ENCODE measurements at regions of chr16 and their contacts with region 1.

Region 1: GRCh38 chr16:27449434-27450195 is 47.6 kb downstream of the IL21R start:
- DNase-seq: peak in 6 of 9 donors; percentile 27 to 73 (median 40)
- ATAC-seq: peak; percentile 79
- H3K4me3 ChIP-seq: no peak overlapping the region
- H3K4me3 Mint-ChIP-seq: peak overlapping the region; percentile 16 to 66 (median 42)
- H3K27ac ChIP-seq: peak overlapping the region; percentile 57
- H3K27ac Mint-ChIP-seq: peak overlapping the region; percentile 66 to 93 (median 85)
- H3K4me1 ChIP-seq: peaks cover 48 to 67% of the 10 kb centered on the region in 2 donors
- H3K4me1 Mint-ChIP-seq: peaks cover 52 to 91% (median 66%) of the 10 kb centered on the region in 7 donors
- H3K27me3 ChIP-seq: no peaks in the 10 kb centered on the region
- H3K27me3 Mint-ChIP-seq: no peaks in the 10 kb centered on the region

Region 2: GRCh38 chr16:26930786-26931581 is 518.6 kb before region 1 on chr16:
- CTCF ChIA-PET with region 1: no interaction called
- POLR2A ChIA-PET with region 1: no interaction called
- intact Hi-C with region 1: no loop called
- DNase-seq: no peak
- ATAC-seq: no peak
- H3K4me3 ChIP-seq: no peak overlapping the region
- H3K4me3 Mint-ChIP-seq: no peak overlapping the region
- H3K27ac ChIP-seq: no peak overlapping the region
- H3K27ac Mint-ChIP-seq: no peak overlapping the region
- H3K4me1 ChIP-seq: no peaks in the 10 kb centered on the region
- H3K4me1 Mint-ChIP-seq: peaks cover 0 to 2% (median 0%) of the 10 kb centered on the region in 7 donors
- H3K27me3 ChIP-seq: no peaks in the 10 kb centered on the region
- H3K27me3 Mint-ChIP-seq: peaks cover 0 to 19% (median 7%) of the 10 kb centered on the region in 5 donors

Region 3: DNA sequence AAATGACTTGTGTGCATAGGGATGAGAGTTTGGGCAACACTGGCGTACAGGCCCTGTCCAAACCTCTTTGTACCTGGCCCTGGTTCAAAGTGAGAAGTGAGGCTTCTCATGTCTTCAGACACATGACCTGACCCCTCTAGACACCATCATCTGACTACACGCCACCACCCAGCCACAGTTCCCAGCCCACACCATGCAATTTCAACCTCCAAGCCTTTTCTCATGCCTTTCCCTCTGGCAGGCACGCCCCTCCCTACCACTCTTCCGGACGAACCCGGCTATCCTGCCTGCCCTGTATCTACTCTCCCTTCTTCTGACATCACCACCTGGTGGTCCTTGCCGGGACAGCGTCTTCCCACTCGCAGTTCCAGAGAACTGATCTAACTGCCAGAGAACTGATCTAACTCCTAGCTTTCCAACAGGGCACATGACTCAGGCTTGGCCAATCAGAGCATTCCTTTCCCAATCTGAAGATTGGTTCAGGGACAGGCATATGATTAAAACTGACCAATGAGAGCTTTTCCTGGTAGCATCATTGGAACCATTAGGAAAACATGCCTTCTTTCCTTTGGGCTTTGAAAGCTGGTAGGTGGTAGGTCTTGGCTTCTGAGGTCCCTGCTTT is 74.7 kb before region 1 on chr16:
- CTCF ChIA-PET with region 1: interaction called, 4 read pairs
- POLR2A ChIA-PET with region 1: interaction called, 10 read pairs
- intact Hi-C with region 1: loop called in 1 of 2 experiments (anchors 2 kb)
- DNase-seq: peak in 1 of 9 donors; percentile 50
- ATAC-seq: peak; percentile 64
- H3K4me3 ChIP-seq: no peak overlapping the region
- H3K4me3 Mint-ChIP-seq: no peak overlapping the region
- H3K27ac ChIP-seq: peak overlapping the region; percentile 53
- H3K27ac Mint-ChIP-seq: no peak overlapping the region
- H3K4me1 ChIP-seq: peaks cover 32 to 71% of the 10 kb centered on the region in 2 donors
- H3K4me1 Mint-ChIP-seq: peaks cover 29 to 53% (median 45%) of the 10 kb centered on the region in 7 donors
- H3K27me3 ChIP-seq: no peaks in the 10 kb centered on the region
- H3K27me3 Mint-ChIP-seq: no peaks in the 10 kb centered on the region

Region 4: DNA sequence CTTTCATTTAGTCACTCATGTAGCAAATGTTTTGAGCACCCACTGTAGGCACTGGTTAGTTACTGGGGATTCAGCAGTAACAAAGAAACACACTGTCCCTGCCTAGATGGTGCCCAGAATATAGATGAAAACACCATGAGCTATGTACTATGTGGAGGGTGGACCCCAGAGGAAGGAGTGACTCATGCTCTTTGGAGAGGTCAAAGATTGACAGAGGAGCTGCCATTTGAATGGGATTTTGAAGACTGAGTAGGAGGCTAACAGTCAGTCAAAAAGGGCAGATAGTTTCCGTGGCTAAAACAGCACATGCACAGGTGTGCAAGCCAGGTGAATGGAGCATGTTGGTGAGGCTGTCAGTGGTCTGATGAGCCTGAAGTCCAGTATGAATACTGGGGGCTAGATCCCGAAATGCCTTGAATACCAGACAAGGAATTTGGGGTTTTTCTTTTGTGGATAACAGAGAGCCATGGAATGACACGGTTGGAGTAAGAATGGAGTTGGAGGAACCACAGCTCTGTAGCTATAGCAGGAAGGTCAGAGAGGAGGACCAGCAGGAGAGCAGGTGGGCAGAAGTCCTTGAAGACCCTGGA is 41.5 kb before region 1 on chr16:
- CTCF ChIA-PET with region 1: interaction called, 3 read pairs
- POLR2A ChIA-PET with region 1: interaction called, 22 read pairs
- intact Hi-C with region 1: no loop called
- DNase-seq: peak in 3 of 9 donors; percentile 21 to 57 (median 56)
- ATAC-seq: peak; percentile 38
- H3K4me3 ChIP-seq: peak overlapping the region; percentile 10
- H3K4me3 Mint-ChIP-seq: peak overlapping the region; percentile 17 to 99 (median 91)
- H3K27ac ChIP-seq: peak overlapping the region; percentile 91
- H3K27ac Mint-ChIP-seq: peak overlapping the region; percentile 67 to 99 (median 97)
- H3K4me1 ChIP-seq: peaks cover 58 to 59% of the 10 kb centered on the region in 2 donors
- H3K4me1 Mint-ChIP-seq: peaks cover 63 to 97% (median 91%) of the 10 kb centered on the region in 7 donors
- H3K27me3 ChIP-seq: no peaks in the 10 kb centered on the region
- H3K27me3 Mint-ChIP-seq: no peaks in the 10 kb centered on the region

Region 5: DNA sequence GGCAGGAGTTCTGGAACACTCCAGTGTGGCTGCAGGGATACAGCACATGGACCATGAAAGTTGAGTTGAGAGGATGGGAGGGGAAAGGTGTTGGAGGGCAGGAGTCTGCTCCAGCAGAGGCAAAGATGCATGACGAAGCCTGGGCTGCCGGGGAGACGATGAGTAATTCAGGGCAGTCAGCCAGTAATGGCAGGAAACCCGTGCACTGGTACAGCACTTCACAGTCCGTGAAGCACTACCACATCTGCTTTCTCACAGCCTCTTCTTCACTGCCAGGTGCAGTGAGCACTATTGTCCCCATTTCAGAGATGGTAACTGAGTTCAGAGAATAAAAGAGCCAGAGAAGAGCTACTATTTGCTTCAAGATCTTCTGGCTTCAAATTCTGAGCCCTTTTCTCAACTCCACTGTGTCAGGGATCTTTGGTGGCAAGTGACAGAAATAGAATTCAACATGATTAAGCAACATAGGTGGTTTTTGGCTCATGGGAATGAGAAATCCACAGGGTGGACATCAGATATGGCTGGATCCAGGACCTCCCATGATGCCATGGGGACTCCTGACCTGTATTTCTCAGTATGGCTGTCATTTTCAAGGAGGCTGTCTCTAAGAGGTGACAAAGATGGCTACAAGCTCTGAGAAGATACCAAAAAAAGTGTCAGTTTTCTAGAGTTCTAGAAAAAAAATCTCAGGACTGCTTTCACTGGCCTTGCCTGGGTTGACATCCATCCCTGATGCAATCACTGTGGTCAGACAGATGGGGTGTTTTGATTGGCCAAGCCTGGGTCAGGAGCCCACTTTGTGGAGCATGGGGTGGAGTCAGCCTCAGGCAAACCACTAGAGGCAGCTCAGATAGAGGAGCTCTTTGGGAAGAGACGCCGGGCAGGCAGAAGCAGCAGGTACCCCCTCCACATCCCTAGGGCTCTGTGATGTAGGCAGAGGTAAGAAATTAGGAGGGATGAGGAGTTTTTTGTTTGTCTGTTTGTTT is 22.9 kb before region 1 on chr16:
- CTCF ChIA-PET with region 1: no interaction called
- POLR2A ChIA-PET with region 1: interaction called, 6 read pairs
- intact Hi-C with region 1: loop called in 1 of 2 experiments (anchors 1 kb)
- DNase-seq: peak in 8 of 9 donors; percentile 25 to 68 (median 55)
- ATAC-seq: peak; percentile 93
- H3K4me3 ChIP-seq: no peak overlapping the region
- H3K4me3 Mint-ChIP-seq: peak overlapping the region in 9 of 10 donors; percentile 9 to 70 (median 18)
- H3K27ac ChIP-seq: peak overlapping the region; percentile 22
- H3K27ac Mint-ChIP-seq: peak overlapping the region; percentile 30 to 86 (median 72)
- H3K4me1 ChIP-seq: peaks cover 15 to 21% of the 10 kb centered on the region in 2 donors
- H3K4me1 Mint-ChIP-seq: peaks cover 29 to 78% (median 62%) of the 10 kb centered on the region in 7 donors
- H3K27me3 ChIP-seq: no peaks in the 10 kb centered on the region
- H3K27me3 Mint-ChIP-seq: no peaks in the 10 kb centered on the region

Region 6: DNA sequence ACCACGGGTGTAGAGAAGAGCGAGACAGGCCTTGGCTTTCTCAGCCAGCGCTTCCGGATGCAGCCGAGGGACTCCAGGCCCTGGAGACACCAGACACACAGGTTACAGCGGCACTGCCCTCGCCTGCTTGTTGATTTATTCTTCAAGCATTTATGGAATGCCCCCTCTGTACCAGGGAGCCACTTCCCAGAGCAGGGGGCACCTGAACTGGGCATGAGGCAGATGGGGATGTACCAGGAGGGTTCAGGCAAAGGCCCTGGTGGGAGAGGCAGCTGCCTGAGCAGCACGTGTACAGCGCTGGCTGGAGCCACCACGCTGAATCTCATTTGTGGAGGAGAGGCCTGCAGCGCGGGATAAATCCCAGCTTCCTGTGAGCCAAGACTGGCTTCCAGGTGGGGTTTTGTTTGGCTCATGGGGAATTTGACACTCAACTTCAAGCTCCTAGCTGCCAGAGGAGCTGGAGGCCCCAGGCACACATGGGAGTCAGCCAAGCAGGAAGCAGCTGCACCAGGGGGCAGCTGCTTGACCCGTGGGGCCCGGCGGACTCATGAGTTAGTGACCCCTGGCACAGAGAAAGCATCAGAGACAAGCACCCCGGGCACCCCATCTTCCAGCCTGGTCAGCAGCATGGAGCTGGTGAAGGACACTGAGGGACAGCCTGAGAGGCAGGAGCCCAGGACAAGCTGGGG is 12.0 kb after region 1 on chr16:
- CTCF ChIA-PET with region 1: interaction called, 5 read pairs
- POLR2A ChIA-PET with region 1: interaction called, 6 read pairs
- intact Hi-C with region 1: loop called in 1 of 2 experiments (anchors 1 kb)
- DNase-seq: no peak
- ATAC-seq: no peak
- H3K4me3 ChIP-seq: no peak overlapping the region
- H3K4me3 Mint-ChIP-seq: no peak overlapping the region
- H3K27ac ChIP-seq: no peak overlapping the region
- H3K27ac Mint-ChIP-seq: peak overlapping the region in 8 of 9 donors; percentile 16 to 64 (median 44)
- H3K4me1 ChIP-seq: peaks cover 40 to 60% of the 10 kb centered on the region in 2 donors
- H3K4me1 Mint-ChIP-seq: peaks cover 24 to 75% (median 39%) of the 10 kb centered on the region in 7 donors
- H3K27me3 ChIP-seq: no peaks in the 10 kb centered on the region
- H3K27me3 Mint-ChIP-seq: no peaks in the 10 kb centered on the region

Region 7: GRCh38 chr16:27549859-27550581 is 100.4 kb after region 1 on chr16 and contains the starts of genes GTF3C1 and KATNIP:
- CTCF ChIA-PET with region 1: no interaction called
- POLR2A ChIA-PET with region 1: no interaction called
- intact Hi-C with region 1: no loop called
- DNase-seq: peak; percentile 100
- ATAC-seq: peak; percentile 100
- H3K4me3 ChIP-seq: peak within 1 kb of the TSS; percentile 100
- H3K4me3 Mint-ChIP-seq: peak within 1 kb of the TSS; percentile 95 to 98 (median 97)
- H3K27ac ChIP-seq: peak within 1 kb of the TSS; percentile 85
- H3K27ac Mint-ChIP-seq: peak within 1 kb of the TSS; percentile 94 to 99 (median 98)
- H3K4me1 ChIP-seq: peaks cover 21 to 22% of the 10 kb centered on the region in 2 donors
- H3K4me1 Mint-ChIP-seq: peaks cover 26 to 51% (median 44%) of the 10 kb centered on the region in 7 donors
- H3K27me3 ChIP-seq: no peaks in the 10 kb centered on the region
- H3K27me3 Mint-ChIP-seq: peaks cover 0 to 2% (median 0%) of the 10 kb centered on the region in 5 donors
- total RNA-seq, gene GTF3C1: 51.8 to 60.0 (median 52.6) TPM
- total RNA-seq, gene KATNIP: 18.7 to 39.0 (median 21.3) TPM

Region 8: GRCh38 chr16:27566417-27566816 is 116.8 kb after region 1 on chr16:
- CTCF ChIA-PET with region 1: no interaction called
- POLR2A ChIA-PET with region 1: no interaction called
- intact Hi-C with region 1: no loop called
- DNase-seq: no peak
- ATAC-seq: peak; percentile 57
- H3K4me3 ChIP-seq: no peak overlapping the region
- H3K4me3 Mint-ChIP-seq: no peak overlapping the region
- H3K27ac ChIP-seq: no peak overlapping the region
- H3K27ac Mint-ChIP-seq: no peak overlapping the region
- H3K4me1 ChIP-seq: no peaks in the 10 kb centered on the region
- H3K4me1 Mint-ChIP-seq: peaks cover 0 to 12% (median 3%) of the 10 kb centered on the region in 7 donors
- H3K27me3 ChIP-seq: no peaks in the 10 kb centered on the region
- H3K27me3 Mint-ChIP-seq: no peaks in the 10 kb centered on the region

Measured in naive thymus-derived CD4-positive, alpha-beta T cell (primary cell).